ENCODE measurements at regions of chr18 and their contacts with region 1.

Region 1: GRCh38 chr18:13216092-13216582 is 2.4 kb upstream of the LDLRAD4 start:
- DNase-seq: peak; percentile 72 to 97 (median 86)

Region 2: DNA sequence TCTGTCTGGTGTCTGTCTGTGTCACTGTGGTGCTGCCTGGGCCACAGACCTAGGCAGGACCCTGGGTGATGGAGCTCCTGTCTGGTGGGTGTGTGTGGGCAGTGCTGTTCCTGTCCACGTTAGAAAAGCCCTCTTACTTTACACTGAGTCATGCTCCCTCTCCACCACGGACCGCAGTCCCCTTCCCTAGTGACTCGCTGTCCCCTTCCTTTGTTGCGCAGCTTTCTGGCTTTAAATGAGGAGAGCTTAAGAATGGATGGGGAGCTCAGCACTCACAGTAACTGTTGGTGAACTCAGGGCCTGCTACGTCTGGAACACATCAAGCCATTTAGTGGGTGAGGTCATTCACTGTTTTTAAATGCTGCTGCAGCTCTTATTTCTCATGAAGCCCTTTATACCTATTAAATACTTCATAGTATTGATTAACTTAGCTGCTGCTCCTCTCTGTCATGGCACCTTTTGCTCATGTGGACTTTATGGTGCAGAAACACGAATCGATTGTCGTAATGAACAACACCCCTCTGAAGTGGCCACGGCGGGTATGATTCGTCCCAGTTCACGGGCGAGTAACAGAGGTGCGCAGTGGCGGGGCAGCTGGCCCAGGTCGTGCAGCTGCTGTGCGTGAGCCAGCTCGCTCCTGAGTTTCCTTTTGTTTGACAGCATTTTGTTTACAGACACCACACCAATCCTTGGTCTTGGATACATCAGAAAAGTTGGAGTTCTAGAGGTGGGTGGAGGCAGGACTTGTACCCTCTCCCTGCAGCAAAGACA is 102.8 kb after region 1 on chr18:
- intact Hi-C with region 1: no loop called
- DNase-seq: no peak

Region 3: DNA sequence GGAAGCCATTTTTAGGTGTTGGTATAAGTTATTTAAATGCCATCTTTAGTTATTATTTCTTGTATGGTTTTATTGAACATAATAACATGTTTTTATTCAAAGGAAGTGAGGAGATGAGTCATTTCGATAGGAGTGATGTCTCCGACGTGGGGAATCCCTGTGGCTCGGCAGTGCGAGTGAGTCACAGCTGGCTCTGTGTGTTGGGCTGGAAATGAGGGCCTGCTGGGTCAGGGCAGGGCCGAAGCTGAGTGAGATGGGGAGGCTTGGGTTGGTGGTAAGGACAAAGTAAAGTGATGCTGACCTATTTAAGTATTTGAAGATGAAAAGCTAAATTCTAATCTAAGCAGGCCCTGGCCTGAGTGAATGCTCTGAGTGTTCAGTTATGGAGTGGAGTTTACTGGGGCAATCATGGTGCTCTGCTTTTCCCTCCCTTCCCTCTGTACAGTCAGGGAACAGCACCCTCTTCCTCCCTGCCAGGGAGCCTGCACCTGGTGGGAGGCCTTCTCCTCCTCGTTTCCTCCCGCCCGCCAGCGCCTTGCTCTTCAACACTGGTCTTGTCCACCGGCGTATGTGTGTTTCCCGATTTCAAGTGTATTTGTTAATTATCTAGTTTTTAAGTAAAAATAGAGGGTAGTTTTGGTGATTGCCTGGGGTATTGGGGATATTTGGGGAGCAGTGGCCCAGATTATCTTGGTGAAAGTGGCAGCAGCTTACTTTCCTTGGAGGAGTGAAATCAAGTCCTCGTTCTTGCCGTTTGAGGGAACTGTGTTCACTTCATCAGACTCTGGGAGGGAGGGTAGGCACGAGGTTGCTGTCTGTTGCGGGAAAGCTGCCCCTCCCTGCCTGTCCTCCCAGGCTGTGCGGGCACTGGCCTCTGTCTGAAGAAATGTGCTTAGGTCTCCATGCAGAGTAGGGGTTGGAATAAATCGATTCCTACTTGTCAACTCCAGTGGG is 159.4 kb after region 1 on chr18:
- intact Hi-C with region 1: loop called (anchors 5 kb)
- DNase-seq: peak in 4 of 10 donors; percentile 61 to 87 (median 85)

Region 4: GRCh38 chr18:13530879-13531387 is 314.8 kb after region 1 on chr18:
- intact Hi-C with region 1: loop called (anchors 2 kb)
- DNase-seq: peak; percentile 40 to 95 (median 71)

Region 5: GRCh38 chr18:13629841-13630715 is 413.9 kb after region 1 on chr18:
- intact Hi-C with region 1: loop called (anchors 5 kb)
- DNase-seq: peak in 6 of 10 donors; percentile 67 to 95 (median 70)

Region 6: GRCh38 chr18:13726232-13726971 is 510.3 kb after region 1 on chr18 and contains the starts of genes FAM210A and RNMT:
- intact Hi-C with region 1: loop called (anchors 10 kb)
- DNase-seq: peak; percentile 94 to 99 (median 96)

Region 7: GRCh38 chr18:13878858-13879257 is 662.7 kb after region 1 on chr18:
- intact Hi-C with region 1: no loop called
- DNase-seq: no peak